SK-N-SH (cell line): ENCODE measurements at regions of chr15 and their contacts with region 1.

Region 1: DNA sequence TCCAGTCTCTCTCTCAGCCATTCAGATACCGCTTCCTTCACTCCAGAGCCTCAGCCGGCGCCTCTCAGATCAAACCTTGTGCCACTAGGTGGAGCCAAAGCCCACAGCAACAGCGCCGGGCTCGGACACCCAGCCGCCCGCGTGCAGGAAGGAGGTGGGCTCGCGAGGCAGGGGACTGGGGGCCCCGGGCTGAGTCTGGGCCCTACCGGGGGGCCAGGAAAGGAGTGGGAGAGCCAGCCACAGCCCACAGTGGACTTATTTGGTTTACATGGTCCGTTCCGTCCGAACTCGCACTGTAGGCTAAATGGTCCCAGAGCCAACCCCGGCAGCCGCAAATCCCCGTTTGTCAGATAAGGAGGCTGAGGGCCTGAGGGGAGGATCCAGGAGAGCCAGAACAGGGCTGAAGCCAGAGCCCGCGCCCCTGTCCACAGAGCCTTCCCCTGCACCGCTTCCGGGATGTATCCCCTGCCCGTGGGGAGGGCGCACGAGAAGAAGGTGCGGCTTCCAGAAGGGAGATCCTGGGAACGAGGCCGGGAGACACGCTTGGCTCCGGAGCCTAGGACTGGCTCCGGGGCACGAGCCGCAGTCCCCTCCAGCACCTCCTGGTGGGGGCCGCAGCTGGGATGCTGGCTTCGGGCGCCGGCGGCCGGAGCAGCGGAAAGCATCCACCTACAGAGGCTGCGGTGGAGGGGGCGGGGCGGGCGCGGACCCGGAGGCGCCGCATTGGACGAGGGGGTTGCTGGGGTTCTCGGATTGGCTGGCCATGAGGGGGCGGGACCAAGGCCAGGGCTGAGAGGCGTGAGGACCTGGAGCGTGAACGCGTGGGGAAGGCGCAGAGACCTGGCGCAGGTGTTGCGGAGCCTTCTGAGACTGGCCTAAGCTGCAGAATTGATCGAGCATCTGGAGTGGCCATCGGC is 6.5 kb upstream of the CYP11A1 start:
- DNase-seq: peak; percentile 99
- H3K4me3 ChIP-seq: peak overlapping the region; percentile 67 to 99
- H3K27ac ChIP-seq: peak overlapping the region in 1 of 2 experiments; percentile 93; a peak in 2 of 4 replicates
- H3K4me1 ChIP-seq: peaks cover 0 to 12% of the 10 kb centered on the region in 2 experiments; a peak in 1 of 4 replicates
- H3K27me3 ChIP-seq: peaks cover 30% of the 10 kb centered on the region
- CTCF ChIP-seq: peak; percentile 90
- EP300 ChIP-seq: no peak; a peak in 1 of 4 replicates
- RAD21 ChIP-seq: peak; percentile 93

Region 2: GRCh38 chr15:74392451-74392830 is 18.5 kb after region 1 on chr15:
- CTCF ChIA-PET with region 1: interaction called, 22 read pairs
- POLR2A ChIA-PET with region 1: no interaction called
- DNase-seq: peak; percentile 61
- H3K4me3 ChIP-seq: no peak overlapping the region
- H3K27ac ChIP-seq: no peak overlapping the region
- H3K4me1 ChIP-seq: peaks cover 0 to 30% of the 10 kb centered on the region in 2 experiments; a peak in 1 of 4 replicates
- H3K27me3 ChIP-seq: no peaks in the 10 kb centered on the region
- CTCF ChIP-seq: no peak
- EP300 ChIP-seq: no peak
- RAD21 ChIP-seq: no peak

Region 3: DNA sequence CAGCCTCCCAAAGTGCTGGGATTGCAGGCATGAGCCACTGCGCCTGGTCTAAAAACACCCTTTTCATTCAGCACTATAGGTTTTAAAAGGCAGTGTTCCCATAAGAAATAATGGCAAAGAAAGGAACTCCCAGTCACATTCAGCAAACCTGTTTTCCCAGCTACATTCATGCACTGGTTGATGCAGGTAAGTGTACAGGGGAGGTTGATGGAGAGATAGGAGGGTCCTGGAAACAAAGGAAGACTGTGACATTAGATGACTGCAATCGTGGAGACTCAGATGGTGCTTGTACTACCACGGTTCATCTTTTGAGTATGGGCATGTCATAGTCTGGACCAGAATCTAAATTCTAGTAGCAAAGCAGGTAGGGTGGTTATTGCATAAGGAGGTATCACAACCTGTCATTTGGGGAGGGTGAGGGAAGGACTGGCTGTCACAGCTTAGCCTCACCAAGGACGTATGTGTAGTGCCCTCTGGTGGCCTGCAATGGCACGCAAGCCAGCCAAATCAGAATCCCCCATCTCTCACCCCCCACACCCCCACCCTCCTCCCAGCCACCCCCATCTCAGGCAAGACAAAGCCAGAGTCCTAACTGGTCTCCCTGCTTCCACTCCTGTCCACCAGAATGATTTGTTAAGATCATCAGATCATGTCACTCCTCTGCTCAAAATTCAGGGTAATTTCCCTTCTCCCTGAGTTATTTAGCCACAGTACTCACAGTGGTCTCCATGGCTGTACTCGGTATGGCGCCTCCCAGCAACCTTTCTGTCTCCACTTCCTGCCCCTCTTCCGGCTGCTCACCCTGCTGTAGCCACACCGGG is 115.7 kb after region 1 on chr15:
- CTCF ChIA-PET with region 1: interaction called, 14 read pairs
- POLR2A ChIA-PET with region 1: interaction called, 5 read pairs
- DNase-seq: peak; percentile 88
- H3K4me3 ChIP-seq: no peak overlapping the region; a peak in 1 of 4 replicates
- H3K27ac ChIP-seq: peak overlapping the region in 1 of 2 experiments; percentile 24; a peak in 1 of 4 replicates
- H3K4me1 ChIP-seq: peaks cover 0 to 3% of the 10 kb centered on the region in 2 experiments; a peak in 1 of 4 replicates
- H3K27me3 ChIP-seq: no peaks in the 10 kb centered on the region
- CTCF ChIP-seq: peak; percentile 70
- EP300 ChIP-seq: no peak
- RAD21 ChIP-seq: peak; percentile 65